ENCODE measurements at regions of chr12 and their contacts with region 1.

Region 1: DNA sequence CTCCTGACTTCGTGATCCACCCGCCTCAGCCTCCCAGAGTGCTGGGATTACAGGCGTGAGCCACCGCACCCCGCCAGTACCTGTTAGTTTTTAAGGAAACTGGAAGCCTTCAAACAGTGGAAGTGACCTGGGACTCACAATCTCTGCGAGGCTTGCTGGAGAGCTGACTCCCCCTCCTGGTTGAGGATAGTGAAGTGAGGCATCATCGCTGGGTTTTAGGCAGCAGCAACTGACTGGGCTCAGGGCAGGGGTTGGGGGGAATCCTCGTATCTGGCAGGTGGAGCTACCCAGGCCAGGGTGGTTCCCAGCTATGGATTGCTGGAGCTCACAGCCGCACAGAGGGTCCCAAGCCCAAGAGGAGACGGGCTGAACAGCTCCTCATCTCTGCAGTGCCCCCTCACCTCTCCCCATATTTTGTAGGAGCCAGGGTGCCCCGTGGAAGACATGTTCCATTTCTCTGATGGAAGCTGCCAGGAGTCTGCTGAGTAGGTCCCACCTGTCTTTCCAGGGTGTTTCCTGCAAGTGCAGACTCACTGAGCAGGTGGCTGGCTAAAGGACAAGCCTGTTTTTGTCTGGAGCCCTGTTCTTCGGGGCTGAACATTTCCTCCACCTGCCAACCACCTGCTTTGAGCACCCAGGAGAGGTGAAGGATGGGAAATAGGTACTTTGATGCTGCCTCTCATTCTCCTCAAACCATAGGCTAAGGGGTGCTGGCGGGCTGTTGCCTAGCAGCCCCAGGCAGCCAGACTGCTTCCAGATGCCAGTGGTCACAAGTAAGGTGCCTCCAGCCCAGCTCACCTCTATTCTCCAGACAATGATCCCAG is 3.1 kb downstream of the AVIL start:
- DNase-seq: no peak
- H3K4me3 ChIP-seq: no peak overlapping the region
- H3K27ac ChIP-seq: no peak overlapping the region
- H3K4me1 ChIP-seq: no peaks in the 10 kb centered on the region
- H3K27me3 ChIP-seq: no peaks in the 10 kb centered on the region
- CTCF ChIP-seq: no peak
- POLR2A ChIP-seq: no peak

Region 2: DNA sequence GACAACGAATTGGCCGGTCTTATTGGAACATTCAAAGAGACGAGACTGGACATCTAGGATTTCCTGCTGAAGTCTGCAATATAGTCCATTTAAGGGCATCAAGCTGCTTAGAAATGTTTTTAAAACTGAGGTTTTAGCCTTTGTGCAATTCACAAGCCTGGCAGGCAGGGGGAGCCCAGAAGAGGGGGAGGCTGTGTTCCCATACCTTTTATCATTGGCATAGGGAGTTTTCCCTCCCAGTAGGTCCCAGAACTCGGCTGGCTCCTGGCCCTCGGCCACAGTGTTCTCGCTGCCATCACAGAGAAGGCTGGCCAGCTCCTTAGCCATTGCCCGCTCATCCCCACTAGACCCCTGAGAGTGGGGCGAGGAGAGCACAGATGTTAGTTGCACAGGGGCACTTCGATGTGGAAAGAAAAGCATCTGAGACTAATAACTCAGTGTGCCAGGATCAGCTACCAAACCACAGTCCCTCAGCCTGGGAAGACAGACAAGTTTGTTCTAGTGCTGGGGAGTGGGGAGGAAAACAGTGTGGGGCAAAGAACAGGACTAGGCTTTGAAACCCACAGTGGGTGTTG is 12.0 kb before region 1 on chr12:
- CTCF ChIA-PET with region 1: interaction called, 47 read pairs
- POLR2A ChIA-PET with region 1: no interaction called
- dilution Hi-C with region 1: no loop called
- intact Hi-C with region 1: no loop called
- DNase-seq: peak; percentile 60
- H3K4me3 ChIP-seq: no peak overlapping the region
- H3K27ac ChIP-seq: no peak overlapping the region
- H3K4me1 ChIP-seq: no peaks in the 10 kb centered on the region
- H3K27me3 ChIP-seq: no peaks in the 10 kb centered on the region
- CTCF ChIP-seq: peak; percentile 81 to 83
- POLR2A ChIP-seq: no peak

Measured in endothelial cell of umbilical vein (primary cell).